Posterior cingulate gyrus (tissue), 11 donors: ENCODE measurements at regions of chr2 and their contacts with region 1.

Region 1: DNA sequence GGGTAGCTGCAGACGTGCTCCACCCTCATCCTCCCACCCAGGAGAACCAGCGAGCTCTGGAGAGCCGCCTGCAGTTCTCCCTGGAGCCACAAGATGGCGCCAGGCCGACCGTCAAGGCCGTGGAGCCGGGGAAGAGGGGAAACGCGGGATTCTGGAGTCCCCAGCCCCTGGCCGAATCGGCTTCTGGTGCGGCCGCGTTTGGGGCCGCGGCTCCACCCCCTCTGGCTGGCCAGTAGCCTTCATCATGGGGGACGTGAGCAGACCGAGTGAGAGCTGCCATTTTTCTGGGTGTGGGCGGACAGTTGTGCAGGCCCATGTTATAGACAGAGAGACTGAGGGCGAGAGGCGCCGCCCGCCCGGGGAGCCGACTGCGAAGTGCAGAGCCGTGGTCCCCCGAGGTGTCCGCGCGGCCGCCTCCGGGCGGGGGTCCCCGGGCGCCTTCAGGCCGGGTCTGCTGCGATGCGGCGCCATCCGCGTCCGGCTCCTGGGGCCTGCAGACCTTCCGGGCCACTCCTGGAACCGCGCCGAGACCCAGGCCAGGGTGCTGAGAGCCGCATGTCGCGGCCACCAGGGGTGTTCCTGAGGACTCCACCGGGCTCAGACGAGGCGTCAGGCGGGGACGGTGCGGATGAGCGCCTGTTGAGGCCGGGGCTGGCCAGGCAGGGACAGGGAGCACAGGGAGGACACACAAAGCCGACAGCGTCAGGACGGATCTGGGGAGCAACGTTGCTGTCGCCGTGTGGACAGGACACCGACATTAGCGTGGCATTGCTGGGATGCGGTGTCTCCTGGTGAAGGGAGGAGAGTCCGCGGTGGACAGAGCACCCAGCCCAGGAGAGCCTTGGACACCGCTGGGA is 418.2 kb upstream of the HS6ST1 start:
- DNase-seq: peak; percentile 69 to 96 (median 84)

Region 2: DNA sequence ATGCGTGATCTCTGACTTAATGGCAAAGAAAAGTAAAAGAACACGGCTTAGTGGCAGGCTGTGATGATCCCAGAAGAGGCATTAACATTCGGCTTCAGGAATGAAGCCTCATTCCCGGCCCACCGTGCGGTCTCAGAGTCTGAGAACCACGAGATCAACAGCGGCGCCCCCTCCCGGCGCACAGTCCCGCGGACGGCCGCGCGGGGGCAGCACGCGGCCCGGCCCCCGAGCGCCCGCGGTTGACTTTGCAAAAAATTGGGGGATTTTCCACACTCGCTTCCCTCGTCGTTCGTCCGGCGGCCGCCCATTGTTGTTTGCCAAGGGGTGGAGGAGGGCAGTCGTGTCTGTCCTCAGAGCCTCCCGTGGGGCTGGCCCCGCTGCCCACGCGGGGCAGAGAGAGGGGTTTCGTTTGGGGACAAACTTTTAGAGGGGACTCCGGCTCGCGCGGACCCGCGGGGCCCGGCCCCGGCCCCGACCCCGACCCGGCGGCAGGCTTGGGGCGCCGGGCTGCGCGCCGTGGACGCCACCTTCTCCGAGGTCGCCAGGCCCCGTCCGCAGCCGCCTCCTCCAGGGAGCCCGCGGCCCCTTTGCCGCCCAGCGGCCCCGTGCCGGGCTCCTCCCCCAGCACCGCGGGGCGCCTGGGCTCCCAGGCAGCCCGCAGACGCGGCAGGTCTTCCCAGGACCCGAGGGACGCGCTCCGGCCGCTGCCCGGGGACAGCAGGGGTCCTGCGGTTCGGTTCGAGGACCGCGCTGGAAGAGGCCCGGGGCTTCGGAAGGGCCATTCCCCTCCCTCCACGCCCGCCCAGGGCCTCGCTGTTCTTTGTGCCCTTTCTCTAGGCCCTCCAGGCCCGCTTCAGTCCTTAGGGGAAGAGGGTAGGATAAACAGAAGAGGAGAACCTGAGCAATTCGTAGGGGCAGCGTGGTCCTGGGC is 414.9 kb before region 1 on chr2:
- intact Hi-C with region 1: loop called (anchors 10 kb)
- DNase-seq: peak; percentile 77 to 98 (median 87)

Region 3: GRCh38 chr2:129396980-129397599 is 660.2 kb after region 1 on chr2:
- intact Hi-C with region 1: loop called (anchors 10 kb)
- DNase-seq: peak in 7 of 10 donors; percentile 43 to 92 (median 68)

Region 4: GRCh38 chr2:129923265-129924091 is 1186.6 kb after region 1 on chr2:
- intact Hi-C with region 1: loop called (anchors 10 kb)
- DNase-seq: peak in 6 of 10 donors; percentile 32 to 87 (median 40)